ENCODE measurements at regions of chr16 and their contacts with region 1.

Region 1: GRCh38 chr16:87723226-87723623 is 42.6 kb downstream of the KLHDC4 start:
- DNase-seq: peak; percentile 65 to 95 (median 90)
- H3K4me3 ChIP-seq: peak overlapping the region in 19 of 59 donors; percentile 1 to 48 (median 20)
- H3K27ac ChIP-seq: peak overlapping the region in 45 of 59 donors; percentile 1 to 84 (median 41)
- H3K27me3 ChIP-seq: no peaks in the 10 kb centered on the region
- CTCF ChIP-seq: peak in 2 of 56 donors; percentile 11 to 13

Region 2: DNA sequence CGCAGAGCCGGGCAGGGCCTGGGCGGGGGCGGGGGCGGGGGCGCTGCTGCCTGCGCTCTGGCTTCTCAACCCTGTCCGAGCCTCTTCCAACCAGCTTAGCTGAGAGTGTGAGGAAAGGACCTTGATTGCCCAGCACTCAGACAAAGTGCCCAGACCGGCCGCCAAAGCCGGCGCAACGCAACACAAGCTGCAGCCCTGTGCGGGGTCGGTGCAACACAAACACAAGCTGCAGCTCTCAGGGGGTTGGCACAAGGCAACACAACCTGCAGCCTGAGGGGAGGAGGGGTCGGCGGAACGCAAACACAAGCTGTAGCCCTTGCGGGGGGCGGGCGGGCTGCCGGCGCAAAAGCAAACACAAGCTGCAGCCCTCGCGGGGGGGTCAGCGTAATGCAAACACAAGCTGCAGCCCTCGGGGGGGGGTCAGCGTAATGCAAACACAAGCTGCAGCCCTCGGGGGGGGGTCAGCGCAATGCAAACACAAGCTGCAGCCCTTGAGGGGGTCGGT is 17.4 kb before region 1 on chr16:
- intact Hi-C with region 1: no loop called
- DNase-seq: no peak
- H3K4me3 ChIP-seq: peak overlapping the region in 23 of 59 donors; percentile 5 to 47 (median 29)
- H3K27ac ChIP-seq: peak overlapping the region in 17 of 59 donors; percentile 5 to 73 (median 35)
- H3K27me3 ChIP-seq: no peaks in the 10 kb centered on the region
- CTCF ChIP-seq: no peak

Region 3: GRCh38 chr16:87740909-87741424 is 17.7 kb after region 1 on chr16:
- intact Hi-C with region 1: loop called in 1 of 2 experiments (anchors 1 kb)
- DNase-seq: peak; percentile 21 to 85 (median 80)
- H3K4me3 ChIP-seq: peak overlapping the region in 7 of 59 donors; percentile 2 to 23 (median 5)
- H3K27ac ChIP-seq: peak overlapping the region in 47 of 59 donors; percentile 2 to 76 (median 46)
- H3K27me3 ChIP-seq: no peaks in the 10 kb centered on the region
- CTCF ChIP-seq: peak in 7 of 56 donors; percentile 11 to 42 (median 16)

Measured in dorsolateral prefrontal cortex (tissue), 120 donors.